ENCODE measurements at regions of chr9 and their contacts with region 1.

Region 1: DNA sequence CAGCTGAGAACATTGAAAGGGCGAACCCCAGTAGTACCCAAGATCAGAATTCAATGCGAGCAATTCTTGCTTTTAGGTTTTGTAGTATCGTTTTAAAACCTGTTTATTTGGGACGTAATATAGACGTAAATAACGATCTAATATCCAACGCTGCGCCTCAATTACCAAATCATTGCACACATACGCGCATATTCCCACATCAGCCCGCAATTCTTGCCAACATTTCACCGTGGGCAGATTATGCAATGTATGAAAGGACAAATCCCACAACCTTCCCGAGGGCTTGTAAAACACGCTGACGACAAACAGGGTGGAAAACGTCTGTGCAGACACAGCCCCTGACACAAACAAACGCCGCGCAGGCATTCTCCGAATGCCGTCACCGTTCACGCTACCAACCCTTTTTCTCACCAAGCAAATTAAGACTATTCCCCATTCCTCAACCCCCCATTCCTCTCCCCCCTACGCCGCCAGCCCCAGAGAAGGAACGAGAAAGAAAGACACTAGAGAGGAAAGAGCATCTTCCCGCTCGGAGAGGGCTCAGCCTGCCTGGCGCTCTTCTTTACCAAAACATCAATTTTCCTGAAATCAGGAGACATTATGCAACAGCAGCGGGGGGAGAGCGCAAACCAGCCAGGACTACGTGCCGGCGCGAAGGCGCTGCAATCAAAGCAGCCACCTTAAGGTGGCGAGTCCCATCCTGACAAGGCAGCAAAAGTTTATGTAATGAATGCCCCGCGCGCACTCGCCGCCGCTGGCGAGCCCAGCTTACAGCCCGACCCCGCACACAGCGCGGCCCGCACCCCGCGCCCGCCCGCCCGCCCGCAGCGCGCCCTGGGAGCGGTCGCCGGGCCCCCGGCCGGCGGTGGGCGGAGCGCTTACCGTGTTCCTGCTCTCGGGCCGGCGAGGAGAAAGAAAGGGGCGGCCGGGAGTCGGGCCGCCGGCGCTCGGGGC is 597 bp downstream of the NFIL3 start:
- DNase-seq: peak; percentile 85
- ATAC-seq: peak; percentile 12
- H3K4me3 ChIP-seq: peak overlapping the region; percentile 58
- H3K27ac ChIP-seq: peak overlapping the region; percentile 90
- H3K4me1 ChIP-seq: peaks cover 10% of the 10 kb centered on the region
- H3K27me3 ChIP-seq: no peaks in the 10 kb centered on the region
- CTCF ChIP-seq: 0 out of 2 replicates have a peak, but pooled peaks have one; percentile 21
- POLR2A ChIP-seq: peak; percentile 87
- RAD21 ChIP-seq: peak; percentile 12; the same call in 1 of the 2 replicates

Region 2: DNA sequence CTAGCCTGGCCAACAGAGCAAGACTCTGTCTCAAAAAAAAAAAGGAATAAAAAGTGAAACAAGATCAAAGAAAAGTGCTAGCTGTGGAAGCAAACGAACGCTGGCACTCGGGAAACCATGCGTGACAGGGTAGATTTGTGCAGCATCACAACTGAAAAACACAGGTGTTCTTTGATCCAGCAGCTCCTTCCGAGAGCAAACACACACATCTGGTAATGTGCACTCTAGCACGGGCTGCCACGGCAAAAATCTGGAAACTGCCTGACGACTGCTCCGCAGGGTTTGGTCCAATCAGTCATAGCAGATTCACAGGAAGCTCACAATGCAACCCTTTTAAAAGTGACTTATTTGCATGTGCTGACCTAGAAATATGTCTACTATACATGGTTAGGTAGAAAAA is 541.4 kb before region 1 on chr9:
- CTCF ChIA-PET with region 1: no interaction called
- POLR2A ChIA-PET with region 1: no interaction called
- dilution Hi-C with region 1: no loop called
- in situ Hi-C with region 1: no loop called
- intact Hi-C with region 1: no loop called
- DNase-seq: no peak
- ATAC-seq: no peak
- H3K4me3 ChIP-seq: no peak overlapping the region
- H3K27ac ChIP-seq: no peak overlapping the region
- H3K4me1 ChIP-seq: no peaks in the 10 kb centered on the region
- H3K27me3 ChIP-seq: peaks cover 11% of the 10 kb centered on the region; the same call in 1 of the 2 replicates
- CTCF ChIP-seq: no peak
- POLR2A ChIP-seq: no peak
- RAD21 ChIP-seq: no peak

Region 3: DNA sequence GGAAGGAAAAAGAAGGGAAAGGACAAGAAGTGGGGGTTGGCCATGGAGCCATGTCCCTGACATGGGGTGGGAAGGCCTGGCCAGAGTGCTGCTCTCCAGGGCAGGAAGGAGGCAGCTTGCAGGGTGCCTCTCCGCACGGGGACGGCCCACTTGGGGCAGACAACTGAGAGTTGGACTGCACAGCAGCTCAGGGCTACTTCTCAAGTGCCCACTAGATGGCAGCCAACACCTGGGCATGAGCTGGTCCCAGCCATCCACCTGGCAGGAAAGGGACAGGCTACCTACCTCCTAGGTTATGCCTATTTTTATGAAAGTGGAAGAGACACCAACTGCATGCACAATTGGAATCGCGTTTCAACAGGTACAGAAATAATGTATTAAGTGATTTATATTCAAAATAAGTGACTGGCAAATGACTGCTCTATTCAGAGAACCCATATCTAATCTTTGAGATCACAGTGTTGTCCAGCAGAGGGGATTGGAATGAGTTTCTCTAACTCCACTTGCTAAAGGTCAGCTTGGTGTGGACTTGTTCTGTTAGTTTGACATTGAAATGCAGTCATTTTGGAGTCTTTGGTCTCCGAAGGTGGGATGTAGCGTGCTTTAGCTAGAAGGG is 508.1 kb before region 1 on chr9:
- CTCF ChIA-PET with region 1: interaction called, 3 read pairs
- POLR2A ChIA-PET with region 1: no interaction called
- dilution Hi-C with region 1: no loop called
- in situ Hi-C with region 1: loop called (anchors 5 kb)
- intact Hi-C with region 1: loop called (anchors 1 kb)
- DNase-seq: peak; percentile 76
- ATAC-seq: peak; percentile 96
- H3K4me3 ChIP-seq: no peak overlapping the region
- H3K27ac ChIP-seq: no peak overlapping the region
- H3K4me1 ChIP-seq: peaks cover 2% of the 10 kb centered on the region
- H3K27me3 ChIP-seq: no peaks in the 10 kb centered on the region
- CTCF ChIP-seq: peak; percentile 83
- POLR2A ChIP-seq: no peak
- RAD21 ChIP-seq: peak; percentile 98

Region 4: DNA sequence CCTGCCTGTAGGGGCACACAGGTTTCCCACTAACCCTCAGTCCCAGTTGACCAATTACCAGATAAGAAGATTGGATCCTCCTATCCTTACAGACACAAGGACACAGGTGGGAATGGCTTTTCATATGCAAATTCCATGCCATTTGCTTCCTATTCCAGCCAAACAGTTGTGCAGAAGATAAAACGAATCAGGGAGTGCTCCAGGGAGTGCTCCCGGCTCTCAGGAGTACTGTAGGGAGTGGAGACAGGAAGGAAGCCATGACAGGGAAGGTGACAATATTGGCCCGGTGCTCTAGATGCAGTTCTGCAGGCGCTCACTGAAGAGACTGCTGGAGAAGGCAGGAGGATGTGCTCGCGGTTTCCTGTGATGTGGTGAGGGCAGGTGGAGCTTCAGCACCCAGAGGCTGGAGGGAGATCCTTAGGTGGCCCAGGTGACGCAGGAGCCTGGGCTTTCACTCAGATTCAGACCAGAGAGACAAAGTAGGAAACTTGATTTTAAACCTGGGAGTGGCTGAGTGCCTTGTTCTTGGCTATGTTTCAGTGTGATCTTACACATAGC is 321.3 kb before region 1 on chr9:
- CTCF ChIA-PET with region 1: no interaction called
- POLR2A ChIA-PET with region 1: no interaction called
- dilution Hi-C with region 1: no loop called
- in situ Hi-C with region 1: no loop called
- intact Hi-C with region 1: loop called (anchors 5 kb)
- DNase-seq: no peak
- ATAC-seq: no peak
- H3K4me3 ChIP-seq: no peak overlapping the region
- H3K27ac ChIP-seq: peak overlapping the region; percentile 65
- H3K4me1 ChIP-seq: peaks cover 26% of the 10 kb centered on the region
- H3K27me3 ChIP-seq: no peaks in the 10 kb centered on the region
- CTCF ChIP-seq: no peak
- POLR2A ChIP-seq: no peak
- RAD21 ChIP-seq: no peak

Region 5: GRCh38 chr9:91164724-91165520 is 258.1 kb before region 1 on chr9:
- CTCF ChIA-PET with region 1: no interaction called
- POLR2A ChIA-PET with region 1: no interaction called
- dilution Hi-C with region 1: no loop called
- in situ Hi-C with region 1: no loop called
- intact Hi-C with region 1: no loop called
- DNase-seq: peak; percentile 100
- ATAC-seq: peak; percentile 98
- H3K4me3 ChIP-seq: no peak overlapping the region
- H3K27ac ChIP-seq: peak overlapping the region; percentile 91
- H3K4me1 ChIP-seq: peaks cover 40% of the 10 kb centered on the region
- H3K27me3 ChIP-seq: no peaks in the 10 kb centered on the region
- CTCF ChIP-seq: no peak
- POLR2A ChIP-seq: peak; percentile 27; the same call in 1 of the 2 replicates
- RAD21 ChIP-seq: peak; percentile 38

Region 6: GRCh38 chr9:91241909-91242308 is 181.1 kb before region 1 on chr9:
- CTCF ChIA-PET with region 1: no interaction called
- POLR2A ChIA-PET with region 1: no interaction called
- dilution Hi-C with region 1: no loop called
- in situ Hi-C with region 1: no loop called
- intact Hi-C with region 1: no loop called
- DNase-seq: peak; percentile 12
- ATAC-seq: peak; percentile 77
- H3K4me3 ChIP-seq: no peak overlapping the region
- H3K27ac ChIP-seq: peak overlapping the region; percentile 97; the same call in 1 of the 2 replicates
- H3K4me1 ChIP-seq: peaks cover 14% of the 10 kb centered on the region
- H3K27me3 ChIP-seq: no peaks in the 10 kb centered on the region
- CTCF ChIP-seq: no peak
- POLR2A ChIP-seq: no peak
- RAD21 ChIP-seq: no peak

Region 7: GRCh38 chr9:91361291-91362050 is 61.6 kb before region 1 on chr9 and contains the start of gene AUH:
- CTCF ChIA-PET with region 1: no interaction called
- POLR2A ChIA-PET with region 1: no interaction called
- dilution Hi-C with region 1: no loop called
- in situ Hi-C with region 1: no loop called
- intact Hi-C with region 1: loop called (anchors 2 kb)
- DNase-seq: peak; percentile 67
- ATAC-seq: peak; percentile 100
- H3K4me3 ChIP-seq: peak within 1 kb of the TSS; percentile 100
- H3K27ac ChIP-seq: peak within 1 kb of the TSS; percentile 80
- H3K4me1 ChIP-seq: peaks cover 6% of the 10 kb centered on the region
- H3K27me3 ChIP-seq: no peaks in the 10 kb centered on the region
- CTCF ChIP-seq: no peak
- POLR2A ChIP-seq: peak; percentile 75; the same call in 1 of the 2 replicates
- RAD21 ChIP-seq: no peak
- total RNA-seq, gene AUH: 8.1 and 12.8 TPM in 2 replicates

Region 8: DNA sequence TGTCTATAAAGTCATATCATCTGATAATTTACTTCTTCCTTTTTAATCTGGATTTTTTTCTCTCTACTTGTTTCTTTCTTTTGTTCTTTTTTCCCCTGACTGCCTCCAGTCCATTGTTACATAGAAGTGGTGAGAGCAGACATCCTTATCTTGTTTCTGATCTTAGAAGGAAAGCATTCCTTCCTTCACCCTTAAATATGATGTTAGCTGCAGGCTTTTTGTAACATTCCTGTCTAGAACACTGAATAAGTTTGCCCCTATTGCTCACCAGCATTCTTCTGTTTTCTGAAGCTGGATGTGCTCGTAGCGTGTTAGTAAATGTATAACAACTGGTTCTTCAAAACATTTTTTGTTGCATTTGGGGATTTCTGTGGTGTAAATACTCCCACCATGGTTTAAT is 137.2 kb after region 1 on chr9:
- CTCF ChIA-PET with region 1: no interaction called
- POLR2A ChIA-PET with region 1: no interaction called
- dilution Hi-C with region 1: no loop called
- in situ Hi-C with region 1: no loop called
- intact Hi-C with region 1: loop called (anchors 5 kb)
- DNase-seq: peak; percentile 41
- ATAC-seq: peak; percentile 52
- H3K4me3 ChIP-seq: no peak overlapping the region
- H3K27ac ChIP-seq: no peak overlapping the region
- H3K4me1 ChIP-seq: peaks cover 5% of the 10 kb centered on the region; the same call in 1 of the 2 replicates
- H3K27me3 ChIP-seq: no peaks in the 10 kb centered on the region
- CTCF ChIP-seq: no peak
- POLR2A ChIP-seq: no peak
- RAD21 ChIP-seq: no peak

Measured in IMR-90 (cell line).